Caco-2 (cell line): ENCODE measurements at regions of chr16 and their contacts with region 1.

Region 1: GRCh38 chr16:66758086-66758485 is 6.7 kb upstream of the DYNC1LI2 start:
- DNase-seq: no peak
- H3K4me3 ChIP-seq: no peak overlapping the region
- H3K4me3 Mint-ChIP-seq: no peak overlapping the region
- H3K27ac Mint-ChIP-seq: no peak overlapping the region
- H3K4me1 ChIP-seq: no peaks in the 10 kb centered on the region; the same call in 1 of the 2 replicates
- H3K4me1 Mint-ChIP-seq: peaks cover 6% of the 10 kb centered on the region
- H3K27me3 ChIP-seq: no peaks in the 10 kb centered on the region
- H3K27me3 Mint-ChIP-seq: no peaks in the 10 kb centered on the region
- CTCF ChIP-seq: peak in 1 of 2 experiments; percentile 23

Region 2: GRCh38 chr16:66668777-66669444 is 89.2 kb before region 1 on chr16:
- CTCF ChIA-PET with region 1: no interaction called
- POLR2A ChIA-PET with region 1: no interaction called
- intact Hi-C with region 1: no loop called
- DNase-seq: no peak
- H3K4me3 ChIP-seq: no peak overlapping the region
- H3K4me3 Mint-ChIP-seq: no peak overlapping the region
- H3K27ac Mint-ChIP-seq: no peak overlapping the region
- H3K4me1 ChIP-seq: peaks cover 4% of the 10 kb centered on the region; the same call in 1 of the 2 replicates
- H3K4me1 Mint-ChIP-seq: no peaks in the 10 kb centered on the region
- H3K27me3 ChIP-seq: no peaks in the 10 kb centered on the region
- H3K27me3 Mint-ChIP-seq: no peaks in the 10 kb centered on the region
- CTCF ChIP-seq: no peak

Region 3: GRCh38 chr16:67236563-67237395 is 478.7 kb after region 1 on chr16:
- CTCF ChIA-PET with region 1: no interaction called
- POLR2A ChIA-PET with region 1: interaction called, 11 read pairs
- intact Hi-C with region 1: no loop called
- DNase-seq: peak; percentile 81 to 85
- H3K4me3 ChIP-seq: no peak overlapping the region
- H3K4me3 Mint-ChIP-seq: no peak overlapping the region
- H3K27ac Mint-ChIP-seq: peak overlapping the region; percentile 33
- H3K4me1 ChIP-seq: peaks cover 16% of the 10 kb centered on the region
- H3K4me1 Mint-ChIP-seq: peaks cover 8% of the 10 kb centered on the region
- H3K27me3 ChIP-seq: no peaks in the 10 kb centered on the region
- H3K27me3 Mint-ChIP-seq: no peaks in the 10 kb centered on the region
- CTCF ChIP-seq: no peak